Psoas muscle (tissue), 8 donors: ENCODE measurements at regions of chr5 and their contacts with region 1.

Region 1: GRCh38 chr5:40688127-40688761 is 8.5 kb downstream of the PTGER4 start:
- DNase-seq: peak; percentile 70 to 82
- ATAC-seq: peak; percentile 86 to 96 (median 93)
- H3K4me3 ChIP-seq: peak overlapping the region; percentile 76
- H3K27ac ChIP-seq: peak overlapping the region; percentile 13
- H3K4me1 ChIP-seq: peaks cover 12% of the 10 kb centered on the region
- H3K27me3 ChIP-seq: peaks cover 0 to 6% (median 2%) of the 10 kb centered on the region in 3 donors
- CTCF ChIP-seq: peak; percentile 90

Region 2: DNA sequence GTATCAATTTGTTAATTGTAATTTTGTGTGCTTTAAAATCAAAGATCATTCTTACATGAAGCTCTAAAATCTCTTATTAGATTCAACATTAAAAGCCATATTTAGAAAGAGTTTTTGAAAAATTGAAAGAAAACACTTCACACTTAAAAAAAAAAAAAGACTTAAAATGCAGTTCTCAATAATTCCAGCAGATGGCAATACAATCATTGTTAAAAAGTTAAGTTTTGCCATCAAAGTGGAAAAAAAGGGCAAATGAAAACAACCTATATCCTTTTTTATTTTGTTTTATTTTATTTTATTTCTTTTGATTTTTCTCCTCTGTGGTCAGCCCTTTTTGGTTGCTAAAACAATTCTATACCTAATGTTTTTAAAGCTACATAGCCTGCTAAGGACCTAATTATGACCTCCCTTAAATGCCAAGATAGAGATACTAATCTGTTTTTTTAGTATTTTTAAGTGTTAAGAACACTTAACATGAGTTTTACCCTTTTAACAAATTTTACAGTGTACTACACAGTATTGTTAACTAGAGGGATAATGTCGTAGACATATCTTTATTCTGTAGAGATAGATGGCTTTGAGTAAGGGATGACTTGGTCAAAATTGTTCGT is 1109.3 kb before region 1 on chr5:
- intact Hi-C with region 1: loop called (anchors 2 to 5 kb)
- DNase-seq: no peak
- ATAC-seq: no peak
- H3K4me3 ChIP-seq: no peak overlapping the region
- H3K27ac ChIP-seq: no peak overlapping the region
- H3K4me1 ChIP-seq: no peaks in the 10 kb centered on the region
- H3K27me3 ChIP-seq: no peaks in the 10 kb centered on the region
- CTCF ChIP-seq: peak; percentile 79

Region 3: GRCh38 chr5:39714036-39714698 is 974.1 kb before region 1 on chr5:
- intact Hi-C with region 1: loop called (anchors 5 to 10 kb)
- DNase-seq: no peak
- ATAC-seq: peak in 3 of 4 donors; percentile 69 to 83 (median 74)
- H3K4me3 ChIP-seq: no peak overlapping the region
- H3K27ac ChIP-seq: peak overlapping the region; percentile 65
- H3K4me1 ChIP-seq: peaks cover 9% of the 10 kb centered on the region
- H3K27me3 ChIP-seq: no peaks in the 10 kb centered on the region
- CTCF ChIP-seq: peak; percentile 68

Region 4: DNA sequence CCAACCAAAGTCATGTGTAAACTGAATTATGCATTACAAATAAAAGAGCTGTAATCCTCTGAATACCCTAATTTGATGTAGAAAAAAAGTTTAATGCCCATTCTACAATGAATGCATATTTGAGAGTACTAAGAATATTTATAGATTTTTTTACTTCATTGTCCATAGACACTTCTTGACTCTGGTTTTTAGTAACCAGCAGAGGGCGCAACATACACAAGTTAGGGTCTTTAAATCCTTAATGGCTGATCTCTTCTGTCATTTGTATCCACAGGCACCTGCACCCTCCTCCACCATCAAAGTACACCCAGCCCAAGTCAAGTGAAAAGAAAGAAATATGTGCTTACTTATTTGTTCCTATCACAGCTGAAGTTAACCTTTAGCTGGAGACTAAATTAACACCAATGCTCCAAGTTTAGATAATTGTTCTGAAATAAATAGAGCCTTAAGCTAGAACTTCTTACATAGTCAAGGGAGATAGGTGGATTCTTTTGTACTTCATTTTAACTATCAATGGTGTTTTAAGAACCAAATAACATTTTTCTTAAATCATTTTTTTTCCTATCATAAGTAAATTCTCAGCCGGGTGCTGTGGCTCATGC is 739.3 kb before region 1 on chr5:
- intact Hi-C with region 1: loop called (anchors 2 to 5 kb)
- DNase-seq: no peak
- ATAC-seq: peak in 3 of 4 donors; percentile 54 to 72 (median 55)
- H3K4me3 ChIP-seq: no peak overlapping the region
- H3K27ac ChIP-seq: no peak overlapping the region
- H3K4me1 ChIP-seq: no peaks in the 10 kb centered on the region
- H3K27me3 ChIP-seq: no peaks in the 10 kb centered on the region
- CTCF ChIP-seq: peak; percentile 67

Region 5: GRCh38 chr5:40774623-40775022 is 86.4 kb after region 1 on chr5:
- intact Hi-C with region 1: no loop called
- DNase-seq: no peak
- ATAC-seq: no peak
- H3K4me3 ChIP-seq: no peak overlapping the region
- H3K27ac ChIP-seq: no peak overlapping the region
- H3K4me1 ChIP-seq: no peaks in the 10 kb centered on the region
- H3K27me3 ChIP-seq: no peaks in the 10 kb centered on the region
- CTCF ChIP-seq: no peak